ENCODE measurements at regions of chr5 and their contacts with region 1.

Region 1: GRCh38 chr5:39547553-39548154 is 122.9 kb upstream of the DAB2 start:
- DNase-seq: peak; percentile 33
- H3K4me3 ChIP-seq: no peak overlapping the region
- H3K27ac ChIP-seq: no peak overlapping the region
- H3K27me3 ChIP-seq: no peaks in the 10 kb centered on the region
- CTCF ChIP-seq: peak; percentile 77

Region 2: DNA sequence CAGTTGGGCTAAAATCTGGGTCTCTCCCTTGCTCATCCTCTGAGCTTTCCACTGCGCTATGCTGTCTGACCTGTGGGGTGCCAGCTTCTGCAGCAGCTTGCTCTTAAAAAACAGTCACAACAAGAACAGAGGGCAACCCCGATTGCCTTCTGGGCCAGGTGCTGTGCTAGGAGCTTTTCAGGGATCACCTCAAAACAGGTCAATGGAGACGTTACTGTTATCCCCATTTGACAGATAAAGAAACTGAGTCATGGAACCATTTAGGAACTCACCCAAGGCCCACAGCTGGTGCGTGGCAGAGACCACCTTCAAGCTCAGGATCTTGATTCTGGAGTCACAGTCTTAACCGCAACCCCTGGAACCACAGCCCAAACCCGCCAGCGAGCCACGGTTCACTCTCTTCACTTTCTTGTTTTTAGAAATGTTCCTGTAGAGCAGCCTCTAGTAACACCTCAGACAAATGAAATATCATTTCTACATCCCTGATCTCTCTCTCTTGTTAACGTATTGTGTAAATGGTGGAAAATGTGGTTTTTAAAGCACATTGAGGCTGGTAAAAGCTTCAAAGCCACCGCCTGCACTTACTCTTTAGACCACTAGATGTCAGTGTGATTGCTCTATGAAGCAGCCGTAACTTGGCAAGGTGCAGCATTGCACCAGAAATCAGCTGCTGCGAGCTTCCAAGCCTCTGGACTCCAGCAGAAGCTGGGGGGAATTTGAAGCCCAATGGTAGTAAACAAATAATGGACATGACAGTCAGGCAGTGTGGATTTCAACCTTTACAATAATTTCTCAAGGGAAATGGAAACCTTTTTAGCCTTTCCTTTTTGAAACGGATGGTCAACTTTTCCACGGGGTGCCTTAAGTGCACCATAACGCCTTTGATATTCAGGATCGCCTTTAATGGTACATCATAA is 330.0 kb before region 1 on chr5:
- CTCF ChIA-PET with region 1: interaction called, 18 read pairs
- POLR2A ChIA-PET with region 1: no interaction called
- DNase-seq: peak; percentile 57
- H3K4me3 ChIP-seq: no peak overlapping the region
- H3K27ac ChIP-seq: no peak overlapping the region
- H3K27me3 ChIP-seq: no peaks in the 10 kb centered on the region
- CTCF ChIP-seq: peak; percentile 98

Region 3: DNA sequence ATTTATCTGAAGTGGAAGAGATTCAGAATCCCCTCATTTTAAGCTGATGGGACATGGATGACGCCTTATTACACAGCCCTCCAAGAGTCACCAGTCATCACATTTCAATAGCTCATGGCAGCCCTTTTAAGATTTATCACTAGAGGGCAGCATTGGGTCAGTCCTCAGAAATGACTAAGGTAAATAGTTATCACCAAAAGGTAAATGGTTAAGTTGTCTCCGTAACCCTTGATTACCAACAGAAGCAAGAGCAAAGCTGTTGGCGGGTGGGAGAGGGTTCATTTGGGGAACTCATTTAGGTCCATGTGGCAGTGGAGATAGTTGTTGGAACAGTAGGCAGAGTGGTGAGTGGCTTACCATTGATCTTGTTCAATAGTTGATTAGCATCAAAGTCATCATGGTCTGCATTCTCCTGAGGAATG is 171.3 kb before region 1 on chr5:
- CTCF ChIA-PET with region 1: interaction called, 124 read pairs
- POLR2A ChIA-PET with region 1: interaction called, 3 read pairs
- DNase-seq: no peak
- H3K4me3 ChIP-seq: no peak overlapping the region
- H3K27ac ChIP-seq: no peak overlapping the region
- H3K27me3 ChIP-seq: no peaks in the 10 kb centered on the region
- CTCF ChIP-seq: peak; percentile 80

Region 4: GRCh38 chr5:39399135-39400036 is 148.3 kb before region 1 on chr5:
- CTCF ChIA-PET with region 1: interaction called, 37 read pairs
- POLR2A ChIA-PET with region 1: interaction called, 6 read pairs
- DNase-seq: peak; percentile 93
- H3K4me3 ChIP-seq: no peak overlapping the region
- H3K27ac ChIP-seq: peak overlapping the region; percentile 92
- H3K27me3 ChIP-seq: no peaks in the 10 kb centered on the region
- CTCF ChIP-seq: no peak

Region 5: GRCh38 chr5:39520232-39520572 is 27.5 kb before region 1 on chr5:
- CTCF ChIA-PET with region 1: interaction called, 12 read pairs
- POLR2A ChIA-PET with region 1: interaction called, 4 read pairs
- DNase-seq: peak; percentile 83
- H3K4me3 ChIP-seq: no peak overlapping the region
- H3K27ac ChIP-seq: no peak overlapping the region
- H3K27me3 ChIP-seq: no peaks in the 10 kb centered on the region
- CTCF ChIP-seq: no peak

Region 6: GRCh38 chr5:39570403-39571027 is 22.9 kb after region 1 on chr5:
- CTCF ChIA-PET with region 1: interaction called, 15 read pairs
- POLR2A ChIA-PET with region 1: no interaction called
- DNase-seq: no peak
- H3K4me3 ChIP-seq: no peak overlapping the region
- H3K27ac ChIP-seq: no peak overlapping the region
- H3K27me3 ChIP-seq: peaks cover 6% of the 10 kb centered on the region
- CTCF ChIP-seq: peak; percentile 78